Transverse colon (tissue), 4 donors: ENCODE measurements at regions of chr12 and their contacts with region 1.

Region 1: GRCh38 chr12:43758728-43759563 is at the starts of genes IRAK4 and PUS7L:
- DNase-seq: peak; percentile 97
- H3K4me3 ChIP-seq: peak within 1 kb of the TSS; percentile 42 to 93 (median 70)
- H3K27ac ChIP-seq: peak within 1 kb of the TSS; percentile 91 to 97 (median 94)
- H3K4me1 ChIP-seq: peaks cover 5 to 49% (median 25%) of the 10 kb centered on the region in 4 donors
- H3K27me3 ChIP-seq: no peaks in the 10 kb centered on the region
- CTCF ChIP-seq: peak in 4 of 5 experiments; percentile 25 to 60 (median 46)
- EP300 ChIP-seq: no peak
- POLR2A ChIP-seq: peak; percentile 91
- total RNA-seq, gene IRAK4: 6.6 to 39.7 (median 19.0) TPM
- total RNA-seq, gene PUS7L: 3.0 to 16.3 (median 9.5) TPM

Region 2: DNA sequence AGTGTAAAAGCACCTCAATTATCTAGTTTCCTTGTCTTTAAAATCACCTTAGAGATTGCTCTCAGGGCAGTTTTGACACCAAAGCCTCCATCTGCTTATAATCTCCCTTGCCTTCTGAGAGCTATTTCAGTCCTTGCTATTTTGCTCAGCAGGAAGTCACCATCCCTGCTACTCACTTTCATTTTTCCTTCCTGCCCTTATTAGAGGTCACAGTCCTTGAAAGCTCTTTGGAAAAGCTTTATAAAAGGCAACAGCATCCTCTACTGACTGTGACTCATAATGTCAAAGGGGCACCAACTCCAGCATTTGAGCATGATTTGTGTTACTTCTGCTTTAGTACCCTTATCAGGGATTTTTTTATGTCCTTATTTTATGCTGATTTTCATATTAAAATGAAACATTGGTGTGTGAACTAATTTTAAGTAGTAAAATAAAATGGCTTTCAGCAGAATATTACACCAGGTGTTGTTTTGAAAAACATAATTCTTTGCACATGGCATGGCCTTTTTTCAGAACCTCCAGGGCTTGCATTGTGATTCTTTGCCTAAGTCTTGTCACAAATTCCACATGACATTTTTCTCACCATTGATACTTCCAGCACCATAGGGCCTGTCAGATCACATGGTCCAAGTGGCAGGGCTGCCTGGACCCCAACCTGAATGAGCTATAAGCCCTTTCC is 420.0 kb before region 1 on chr12:
- in situ Hi-C with region 1: no loop called
- intact Hi-C with region 1: no loop called
- DNase-seq: no peak
- H3K4me3 ChIP-seq: no peak overlapping the region
- H3K27ac ChIP-seq: no peak overlapping the region
- H3K4me1 ChIP-seq: peaks cover 0 to 6% (median 0%) of the 10 kb centered on the region in 4 donors
- H3K27me3 ChIP-seq: no peaks in the 10 kb centered on the region
- CTCF ChIP-seq: peak in 1 of 5 experiments; percentile 18
- EP300 ChIP-seq: no peak
- POLR2A ChIP-seq: no peak

Region 3: GRCh38 chr12:43551279-43551970 is 207.5 kb before region 1 on chr12:
- in situ Hi-C with region 1: no loop called
- intact Hi-C with region 1: no loop called
- DNase-seq: no peak
- H3K4me3 ChIP-seq: no peak overlapping the region
- H3K27ac ChIP-seq: no peak overlapping the region
- H3K4me1 ChIP-seq: no peaks in the 10 kb centered on the region
- H3K27me3 ChIP-seq: peaks cover 31% of the 10 kb centered on the region
- CTCF ChIP-seq: no peak
- EP300 ChIP-seq: no peak
- POLR2A ChIP-seq: no peak

Region 4: GRCh38 chr12:43805860-43806736 is 47.2 kb after region 1 on chr12 and contains the start of gene TWF1:
- in situ Hi-C with region 1: loop called in 1 of 4 experiments (anchors 5 kb)
- intact Hi-C with region 1: no loop called
- DNase-seq: peak; percentile 92
- H3K4me3 ChIP-seq: peak within 1 kb of the TSS; percentile 83 to 100 (median 94)
- H3K27ac ChIP-seq: peak within 1 kb of the TSS; percentile 97 to 99 (median 98)
- H3K4me1 ChIP-seq: peaks cover 11 to 33% (median 19%) of the 10 kb centered on the region in 4 donors
- H3K27me3 ChIP-seq: no peaks in the 10 kb centered on the region
- CTCF ChIP-seq: peak in 4 of 5 experiments; percentile 33 to 60 (median 53)
- EP300 ChIP-seq: no peak
- POLR2A ChIP-seq: peak; percentile 79
- total RNA-seq, gene TWF1: 32.8 to 99.9 (median 62.5) TPM